ENCODE measurements at regions of chr6 and their contacts with region 1.

Region 1: DNA sequence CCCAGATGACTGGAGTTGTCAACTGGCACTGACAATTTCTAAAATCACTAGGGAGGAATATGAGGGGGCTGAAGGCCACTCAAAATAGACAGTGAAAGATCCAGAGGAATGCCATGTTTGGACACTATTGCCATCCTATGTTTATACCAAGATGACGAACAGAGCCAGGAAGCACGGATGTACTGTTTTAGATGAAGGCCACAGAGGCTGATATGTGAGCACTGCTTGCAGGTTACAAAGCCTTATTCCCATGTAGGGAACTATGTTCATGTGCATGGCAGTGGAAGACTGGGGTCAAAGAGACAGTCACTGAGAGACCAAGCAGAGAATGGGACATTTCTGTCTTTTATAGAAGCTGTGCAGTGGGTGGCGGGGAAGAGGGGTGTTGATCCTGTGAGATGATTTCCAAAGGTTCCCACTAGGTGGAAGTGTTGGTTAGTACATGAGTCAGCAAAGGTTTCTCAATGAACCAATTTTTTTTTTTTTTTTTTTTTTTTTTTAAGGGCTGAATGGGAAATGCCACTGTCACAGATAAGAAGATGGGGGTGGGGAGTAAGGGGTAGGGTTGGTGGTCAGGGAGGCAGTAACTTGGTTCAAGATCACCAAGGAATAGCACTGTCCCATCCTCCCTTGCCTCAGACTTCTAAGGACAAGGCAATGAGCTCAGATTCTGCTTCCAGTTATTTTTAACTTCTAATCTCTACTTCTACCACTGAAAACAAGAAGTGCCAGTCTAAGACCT is 46.7 kb upstream of the MOCS1 start:
- DNase-seq: peak; percentile 52
- ATAC-seq: peak; percentile 91
- H3K4me3 ChIP-seq: no peak overlapping the region
- H3K27ac ChIP-seq: no peak overlapping the region
- H3K4me1 ChIP-seq: no peaks in the 10 kb centered on the region
- H3K27me3 ChIP-seq: no peaks in the 10 kb centered on the region
- CTCF ChIP-seq: peak; percentile 70
- EP300 ChIP-seq: no peak
- POLR2A ChIP-seq: no peak
- RAD21 ChIP-seq: no peak

Region 2: DNA sequence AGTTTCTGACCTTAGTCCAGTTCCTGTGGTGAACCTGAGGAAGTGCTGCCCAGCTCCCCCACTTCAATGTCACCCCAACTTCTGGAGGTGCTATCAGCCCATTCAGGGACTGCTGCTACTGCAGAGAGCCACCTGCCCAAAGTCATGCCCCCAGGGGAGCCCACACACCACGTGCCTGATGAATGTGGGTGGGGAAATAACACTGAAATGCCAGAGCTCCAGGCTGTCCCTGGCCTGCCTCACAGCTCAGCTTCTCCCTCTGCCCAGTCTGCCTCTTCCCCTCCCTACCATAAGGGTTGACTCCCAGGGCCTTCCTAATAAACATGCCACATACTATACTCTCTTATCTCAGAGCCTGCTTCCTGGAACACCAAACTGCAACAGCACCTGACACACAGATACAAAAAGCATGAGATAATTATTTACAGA is 229.6 kb after region 1 on chr6:
- CTCF ChIA-PET with region 1: no interaction called
- POLR2A ChIA-PET with region 1: no interaction called
- in situ Hi-C with region 1: no loop called
- intact Hi-C with region 1: no loop called
- DNase-seq: no peak
- ATAC-seq: no peak
- H3K4me3 ChIP-seq: no peak overlapping the region
- H3K27ac ChIP-seq: no peak overlapping the region
- H3K4me1 ChIP-seq: no peaks in the 10 kb centered on the region
- H3K27me3 ChIP-seq: no peaks in the 10 kb centered on the region
- CTCF ChIP-seq: no peak
- EP300 ChIP-seq: no peak
- POLR2A ChIP-seq: no peak
- RAD21 ChIP-seq: no peak

Region 3: DNA sequence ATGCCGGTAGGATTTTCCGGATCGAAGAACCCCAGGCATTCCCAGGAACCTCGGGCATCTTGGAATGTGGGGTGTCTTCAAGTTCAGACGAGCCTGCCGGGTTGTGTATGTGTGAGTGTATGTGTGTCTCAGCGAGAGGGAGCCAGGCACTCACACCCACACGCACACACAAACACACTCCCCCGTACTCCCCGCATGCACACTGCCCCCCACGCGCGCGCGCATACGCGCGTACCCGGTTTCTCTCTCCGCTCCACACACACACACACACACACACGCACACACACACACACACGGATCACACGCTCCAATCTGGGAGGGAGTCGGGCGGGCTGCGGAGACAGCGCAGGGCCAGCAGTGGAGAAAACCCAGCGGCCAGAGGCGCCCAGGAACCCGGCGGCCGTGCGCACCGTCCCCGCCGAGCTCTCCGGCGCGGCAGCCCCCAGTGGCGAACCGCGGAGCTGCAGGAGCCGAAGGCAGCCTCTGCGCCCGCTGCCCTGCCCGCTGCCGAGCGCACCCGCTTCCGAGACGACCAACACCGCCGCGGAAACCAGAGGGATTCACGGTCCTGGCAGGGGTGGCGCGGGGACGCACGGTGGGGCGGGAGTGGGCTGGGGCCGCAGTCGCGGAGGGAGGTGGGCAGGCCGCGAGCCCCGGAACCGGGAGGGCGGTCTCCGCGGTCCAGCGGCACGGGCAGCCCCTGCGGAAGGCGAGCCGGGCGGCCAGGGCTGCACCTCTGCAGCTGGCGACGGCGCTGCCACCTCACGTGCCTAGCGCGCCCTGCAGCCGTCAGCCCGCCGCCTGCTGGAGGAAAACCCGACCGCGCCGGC is 606.4 kb after region 1 on chr6 and contains the start of gene LRFN2:
- CTCF ChIA-PET with region 1: no interaction called
- POLR2A ChIA-PET with region 1: no interaction called
- in situ Hi-C with region 1: no loop called
- intact Hi-C with region 1: loop called (anchors 5 kb)
- DNase-seq: peak; percentile 31
- ATAC-seq: peak; percentile 99
- H3K4me3 ChIP-seq: peak within 1 kb of the TSS in 2 of 3 experiments; percentile 19 to 64; a peak in 4 of 6 replicates
- H3K27ac ChIP-seq: no peak within 1 kb of the TSS
- H3K4me1 ChIP-seq: 0 out of 2 replicates have a peak, but pooled peaks cover 7% of the 10 kb centered on the region
- H3K27me3 ChIP-seq: peaks cover 3 to 38% of the 10 kb centered on the region in 2 experiments
- CTCF ChIP-seq: peak; percentile 75
- EP300 ChIP-seq: no peak
- POLR2A ChIP-seq: no peak
- RAD21 ChIP-seq: peak; percentile 63
- total RNA-seq, gene LRFN2: not detected in 2 replicates